ENCODE measurements at regions of chr11 and their contacts with region 1.

Region 1: DNA sequence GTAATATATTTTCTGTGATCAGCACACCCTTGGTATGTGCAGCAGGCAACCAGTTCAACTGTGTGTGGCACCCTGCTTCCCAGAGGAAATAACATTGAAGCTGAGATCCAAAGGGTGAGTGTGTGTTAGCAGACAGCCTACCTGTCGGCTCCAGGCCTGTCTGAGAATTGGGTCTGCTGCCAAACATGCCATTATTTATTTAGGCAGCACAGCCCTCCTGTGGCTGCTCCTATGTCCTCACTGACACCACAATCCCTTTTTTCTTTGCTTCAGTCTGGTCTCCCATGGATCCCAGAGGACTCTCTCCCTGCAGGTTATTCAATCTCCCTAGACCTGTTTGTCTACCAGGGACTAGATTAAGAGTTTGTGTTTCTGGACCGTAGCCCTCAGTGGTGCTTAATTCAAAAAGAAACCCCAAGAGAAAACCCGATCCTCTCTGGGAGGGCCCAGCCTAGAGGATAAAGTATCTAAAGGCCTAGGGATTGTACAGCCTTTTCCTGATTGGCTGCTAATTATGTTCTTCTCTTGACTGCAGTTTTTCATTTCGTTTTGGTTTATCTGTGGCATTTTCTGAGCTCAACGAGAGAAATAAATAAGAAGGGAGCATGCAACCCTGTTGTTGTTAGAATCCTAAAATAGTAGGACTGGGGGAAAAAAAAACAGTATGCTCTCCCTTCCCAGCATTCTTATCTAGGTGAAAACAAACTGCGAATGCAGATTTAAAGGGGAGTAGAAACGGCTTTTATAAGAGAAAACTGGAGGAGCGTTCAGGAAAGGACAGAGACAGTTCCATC is 24.1 kb downstream of the KCNE3 start:
- DNase-seq: peak; percentile 57
- H3K4me3 ChIP-seq: no peak overlapping the region
- H3K27ac ChIP-seq: no peak overlapping the region
- H3K4me1 ChIP-seq: no peaks in the 10 kb centered on the region
- H3K27me3 ChIP-seq: no peaks in the 10 kb centered on the region
- CTCF ChIP-seq: peak; percentile 54 to 64

Region 2: DNA sequence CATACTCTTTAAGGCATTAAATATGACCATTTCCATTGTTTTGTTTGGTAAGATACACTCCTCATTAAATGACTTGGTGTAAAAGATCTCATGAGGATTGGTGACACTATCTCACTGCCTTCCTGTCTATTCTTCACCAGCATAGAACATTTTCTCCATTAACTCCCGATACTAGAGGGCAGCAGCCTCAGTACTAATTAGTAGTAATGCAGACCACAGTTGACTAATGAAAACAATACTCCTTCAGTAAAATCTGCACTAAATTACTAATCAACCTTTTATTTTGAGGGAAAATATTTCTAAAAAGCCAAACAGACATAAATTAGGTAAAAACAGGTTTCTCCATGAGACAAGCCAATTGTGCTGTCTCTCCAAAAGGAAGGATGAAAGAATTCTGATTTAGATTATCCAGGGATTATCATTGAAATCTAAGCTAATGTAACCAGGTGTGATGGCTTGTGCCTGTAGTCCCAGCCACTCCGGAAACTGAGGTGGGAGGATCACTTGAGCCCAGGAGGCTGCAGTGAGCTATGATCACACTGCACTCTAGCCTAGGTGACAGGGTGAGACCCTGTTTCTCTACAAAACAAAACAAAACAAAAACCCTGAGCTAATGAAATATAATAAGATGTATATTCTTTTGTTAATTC is 54.5 kb before region 1 on chr11:
- CTCF ChIA-PET with region 1: no interaction called
- dilution Hi-C with region 1: no loop called
- in situ Hi-C with region 1: loop called in 1 of 2 experiments (anchors 5 kb)
- intact Hi-C with region 1: loop called (anchors 1 kb)
- DNase-seq: peak; percentile 51
- H3K4me3 ChIP-seq: no peak overlapping the region
- H3K27ac ChIP-seq: no peak overlapping the region
- H3K4me1 ChIP-seq: peaks cover 4% of the 10 kb centered on the region
- H3K27me3 ChIP-seq: no peaks in the 10 kb centered on the region
- CTCF ChIP-seq: peak; percentile 67 to 80

Region 3: DNA sequence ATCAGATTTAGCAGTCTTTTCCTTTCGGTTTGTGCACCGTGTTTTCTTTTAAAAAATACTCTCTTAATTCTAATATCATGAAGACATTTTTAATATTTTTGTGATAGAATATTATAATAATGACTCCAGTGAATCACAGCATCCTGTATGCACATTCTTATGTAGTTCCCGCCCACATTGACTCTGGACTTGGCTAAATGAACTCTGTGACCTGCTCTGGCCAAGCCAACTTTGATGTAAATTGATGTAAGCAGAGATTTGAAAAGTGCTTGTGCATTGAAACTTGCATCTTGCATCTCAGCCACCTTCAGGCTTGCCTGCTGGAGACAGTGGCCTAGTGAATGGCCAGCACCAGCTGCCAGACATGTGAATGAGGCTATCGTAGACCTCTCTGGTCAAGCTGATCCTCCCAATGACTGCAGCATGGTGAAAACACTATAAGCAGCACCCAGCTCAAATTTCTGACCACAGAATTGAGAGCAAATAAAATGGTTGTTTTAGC is 15.8 kb before region 1 on chr11:
- CTCF ChIA-PET with region 1: no interaction called
- dilution Hi-C with region 1: no loop called
- in situ Hi-C with region 1: no loop called
- intact Hi-C with region 1: no loop called
- DNase-seq: no peak
- H3K4me3 ChIP-seq: no peak overlapping the region
- H3K27ac ChIP-seq: no peak overlapping the region
- H3K4me1 ChIP-seq: peaks cover 6% of the 10 kb centered on the region
- H3K27me3 ChIP-seq: no peaks in the 10 kb centered on the region
- CTCF ChIP-seq: no peak